ENCODE measurements at regions of chr2 and their contacts with region 1.

Region 1: GRCh38 chr2:17646081-17646554 is 105.6 kb downstream of the VSNL1 start:
- DNase-seq: peak; percentile 45
- ATAC-seq: peak; percentile 88
- H3K4me3 ChIP-seq: no peak overlapping the region
- H3K27ac ChIP-seq: no peak overlapping the region
- H3K4me1 ChIP-seq: peaks cover 3% of the 10 kb centered on the region
- H3K27me3 ChIP-seq: no peaks in the 10 kb centered on the region
- CTCF ChIP-seq: peak; percentile 75 to 88 (median 87); a peak in 4 of 6 replicates
- EP300 ChIP-seq: 0 out of 4 replicates have a peak, but pooled peaks of 1 of the 2 experiments have one; percentile 15
- POLR2A ChIP-seq: no peak
- RAD21 ChIP-seq: peak; percentile 79

Region 2: DNA sequence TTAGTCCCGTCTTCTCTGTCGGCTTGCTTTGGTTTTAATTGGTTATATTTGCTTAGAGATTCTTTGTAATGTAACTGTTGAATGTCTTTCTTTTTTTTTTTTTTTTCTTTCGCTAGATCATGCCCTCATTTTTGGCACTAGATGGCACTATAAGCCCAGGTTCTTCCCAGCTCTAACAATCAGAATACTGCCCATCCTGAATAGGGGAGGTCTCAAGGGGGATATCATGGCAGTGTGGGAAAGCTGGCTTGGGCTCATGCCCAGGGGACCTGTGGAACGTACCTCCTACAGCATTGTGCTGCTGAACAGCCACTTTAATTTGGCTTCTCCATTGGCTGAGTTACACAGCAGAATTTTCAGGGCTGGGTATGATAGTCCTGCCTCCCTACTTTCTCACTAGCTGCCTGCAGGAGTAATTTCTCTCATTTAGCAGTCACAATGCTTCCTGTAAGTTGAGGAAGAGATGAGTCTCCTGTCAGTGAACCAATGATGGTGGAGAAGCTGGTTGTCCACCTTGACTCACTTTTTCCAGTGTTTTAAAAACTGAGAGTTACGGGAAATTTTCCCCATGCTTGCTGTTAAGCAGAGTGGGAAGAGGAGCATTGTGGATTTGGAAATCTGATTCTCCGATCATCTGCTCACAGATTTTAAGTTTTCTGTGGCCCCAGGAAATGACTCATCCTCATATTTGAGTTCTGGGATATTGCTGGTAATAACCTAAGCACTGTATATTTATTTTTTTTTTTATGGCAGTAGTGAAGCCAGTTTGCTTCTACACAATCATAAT is 175.1 kb before region 1 on chr2:
- CTCF ChIA-PET with region 1: interaction called, 25 read pairs
- POLR2A ChIA-PET with region 1: no interaction called
- RAD21 ChIA-PET with region 1: interaction called, 9 read pairs
- SMC1A ChIA-PET with region 1: interaction called, 6 read pairs
- in situ Hi-C with region 1: no loop called
- intact Hi-C with region 1: no loop called
- DNase-seq: peak; percentile 4
- ATAC-seq: peak; percentile 78
- H3K4me3 ChIP-seq: no peak overlapping the region
- H3K27ac ChIP-seq: no peak overlapping the region
- H3K4me1 ChIP-seq: no peaks in the 10 kb centered on the region
- H3K27me3 ChIP-seq: no peaks in the 10 kb centered on the region
- CTCF ChIP-seq: peak; percentile 36 to 50 (median 47)
- EP300 ChIP-seq: no peak
- POLR2A ChIP-seq: no peak
- RAD21 ChIP-seq: peak; percentile 82

Region 3: GRCh38 chr2:17518212-17519154 is 127.6 kb before region 1 on chr2 and contains the start of gene RAD51AP2:
- CTCF ChIA-PET with region 1: interaction called, 6 read pairs
- POLR2A ChIA-PET with region 1: no interaction called
- RAD21 ChIA-PET with region 1: interaction called, 3 read pairs
- SMC1A ChIA-PET with region 1: interaction called, 6 read pairs
- in situ Hi-C with region 1: no loop called
- intact Hi-C with region 1: loop called (anchors 2 kb)
- DNase-seq: peak; percentile 40
- ATAC-seq: peak; percentile 93
- H3K4me3 ChIP-seq: peak within 1 kb of the TSS; percentile 61; the same call in 1 of the 2 replicates
- H3K27ac ChIP-seq: peak within 1 kb of the TSS; percentile 6; the same call in 1 of the 2 replicates
- H3K4me1 ChIP-seq: peaks cover 10% of the 10 kb centered on the region; the same call in 1 of the 2 replicates
- H3K27me3 ChIP-seq: no peaks in the 10 kb centered on the region
- CTCF ChIP-seq: no peak; a peak in 1 of 6 replicates
- EP300 ChIP-seq: no peak
- POLR2A ChIP-seq: peak; percentile 54; the same call in 1 of the 2 replicates
- RAD21 ChIP-seq: no peak
- polyA plus RNA-seq, gene RAD51AP2: 0.02 TPM in 1 of 2 experiments, not detected in the other

Region 4: GRCh38 chr2:17628349-17629261 is 17.5 kb before region 1 on chr2:
- CTCF ChIA-PET with region 1: interaction called, 25 read pairs
- POLR2A ChIA-PET with region 1: no interaction called
- RAD21 ChIA-PET with region 1: no interaction called
- SMC1A ChIA-PET with region 1: interaction called, 5 read pairs
- in situ Hi-C with region 1: no loop called
- intact Hi-C with region 1: no loop called
- DNase-seq: no peak
- ATAC-seq: peak; percentile 53
- H3K4me3 ChIP-seq: no peak overlapping the region
- H3K27ac ChIP-seq: no peak overlapping the region
- H3K4me1 ChIP-seq: no peaks in the 10 kb centered on the region
- H3K27me3 ChIP-seq: no peaks in the 10 kb centered on the region
- CTCF ChIP-seq: no peak
- EP300 ChIP-seq: no peak
- POLR2A ChIP-seq: no peak
- RAD21 ChIP-seq: no peak

Region 5: DNA sequence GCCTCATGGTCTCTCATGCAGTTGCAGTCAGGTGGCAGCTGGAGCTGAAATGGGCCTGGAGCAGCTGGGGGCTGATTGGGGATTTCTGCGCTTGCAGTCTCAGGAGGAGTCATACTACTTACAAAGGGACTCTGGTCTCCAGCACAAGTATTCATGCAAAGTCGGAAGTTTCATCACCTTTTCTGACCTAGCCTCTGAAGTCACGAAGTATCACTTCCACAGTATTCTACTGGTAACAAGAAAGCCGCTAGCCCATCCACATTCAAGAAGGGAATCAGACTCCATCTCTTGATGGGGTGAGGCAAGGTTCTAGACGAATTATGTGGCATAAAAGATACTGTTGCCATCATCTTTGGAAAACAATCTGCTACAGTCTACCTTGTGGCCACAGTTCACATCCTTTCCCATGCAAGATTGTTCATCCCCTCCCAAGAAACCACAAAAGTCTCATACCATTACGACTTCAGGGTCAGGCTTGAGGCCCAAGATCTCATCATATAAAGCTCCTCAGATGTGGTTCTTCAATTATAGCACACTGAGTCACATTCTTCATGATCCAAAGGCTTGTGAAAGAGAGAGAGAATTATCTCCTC is 12.2 kb after region 1 on chr2:
- CTCF ChIA-PET with region 1: interaction called, 604 read pairs
- POLR2A ChIA-PET with region 1: interaction called, 4 read pairs
- RAD21 ChIA-PET with region 1: interaction called, 25 read pairs
- SMC1A ChIA-PET with region 1: interaction called, 165 read pairs
- in situ Hi-C with region 1: no loop called
- intact Hi-C with region 1: loop called (anchors 1 kb)
- DNase-seq: peak; percentile 64
- ATAC-seq: peak; percentile 95
- H3K4me3 ChIP-seq: no peak overlapping the region
- H3K27ac ChIP-seq: peak overlapping the region; percentile 57
- H3K4me1 ChIP-seq: peaks cover 15% of the 10 kb centered on the region
- H3K27me3 ChIP-seq: no peaks in the 10 kb centered on the region
- CTCF ChIP-seq: no peak
- EP300 ChIP-seq: peak in 1 of 2 experiments; percentile 33; a peak in 1 of 4 replicates
- POLR2A ChIP-seq: no peak
- RAD21 ChIP-seq: no peak

Region 6: DNA sequence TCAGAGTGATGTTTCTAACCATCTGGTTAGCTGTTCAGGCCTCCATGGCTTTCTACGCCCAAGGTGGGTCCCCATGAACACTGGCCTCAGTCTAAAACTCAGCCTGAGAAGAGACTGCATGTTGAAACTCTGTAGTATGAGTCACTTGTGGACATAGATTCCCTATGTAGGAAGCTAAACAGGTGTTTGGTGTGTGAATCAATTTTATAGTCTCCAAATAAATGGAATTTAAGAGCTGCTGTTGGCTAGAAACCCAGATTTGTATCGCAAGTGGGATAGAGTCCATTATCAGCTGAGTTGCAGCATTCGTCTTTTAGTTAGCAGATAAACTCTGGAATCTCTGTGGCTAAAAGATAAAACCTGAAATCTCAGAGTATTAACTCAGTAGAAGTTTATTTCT is 363.8 kb after region 1 on chr2:
- CTCF ChIA-PET with region 1: no interaction called
- POLR2A ChIA-PET with region 1: no interaction called
- RAD21 ChIA-PET with region 1: no interaction called
- SMC1A ChIA-PET with region 1: no interaction called
- in situ Hi-C with region 1: no loop called
- intact Hi-C with region 1: no loop called
- DNase-seq: no peak
- ATAC-seq: no peak
- H3K4me3 ChIP-seq: no peak overlapping the region
- H3K27ac ChIP-seq: no peak overlapping the region
- H3K4me1 ChIP-seq: no peaks in the 10 kb centered on the region
- H3K27me3 ChIP-seq: no peaks in the 10 kb centered on the region
- CTCF ChIP-seq: no peak
- EP300 ChIP-seq: no peak
- POLR2A ChIP-seq: no peak
- RAD21 ChIP-seq: no peak